ENCODE measurements at regions of chr5 and their contacts with region 1.

Region 1: DNA sequence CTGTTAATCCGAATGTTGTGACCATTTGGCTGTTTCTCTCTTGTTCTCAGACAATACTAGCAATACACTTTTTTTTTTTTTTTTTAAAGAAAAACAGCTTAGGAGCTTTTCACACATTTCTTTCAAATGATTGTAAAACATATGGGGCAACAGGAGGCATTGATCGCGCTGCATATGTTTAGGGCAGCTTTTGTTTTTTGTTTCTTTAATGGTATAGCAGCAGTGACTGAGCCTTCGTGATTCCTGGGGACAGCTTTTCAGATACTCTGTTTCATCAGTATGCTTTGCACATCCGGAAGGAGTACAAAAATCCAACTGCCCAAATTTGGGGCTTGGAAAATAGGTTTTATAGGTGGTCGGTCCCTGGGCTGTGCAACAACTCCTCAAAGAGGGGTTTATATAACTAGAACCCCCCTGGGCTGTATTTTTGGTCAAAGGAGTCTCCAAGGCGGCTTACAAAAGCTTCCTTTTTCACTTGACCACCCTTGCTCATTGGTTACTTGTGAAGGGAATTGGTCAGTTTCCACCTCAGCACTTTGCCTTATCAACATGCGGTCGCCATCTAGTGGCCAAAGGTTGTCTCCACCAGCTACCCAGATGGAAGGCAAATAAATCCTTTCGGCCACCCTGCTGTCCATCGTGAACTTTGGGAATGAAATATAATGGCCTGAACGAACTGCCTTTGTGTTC is 91.8 kb downstream of the PDE6A start:
- DNase-seq: peak; percentile 87
- H3K4me3 ChIP-seq: no peak overlapping the region
- H3K27ac ChIP-seq: peak overlapping the region; percentile 9 to 63 (median 34)
- H3K4me1 ChIP-seq: peaks cover 0 to 19% (median 15%) of the 10 kb centered on the region in 4 donors
- H3K27me3 ChIP-seq: no peaks in the 10 kb centered on the region
- CTCF ChIP-seq: peak; percentile 85 to 92 (median 89)
- EP300 ChIP-seq: no peak
- POLR2A ChIP-seq: no peak

Region 2: DNA sequence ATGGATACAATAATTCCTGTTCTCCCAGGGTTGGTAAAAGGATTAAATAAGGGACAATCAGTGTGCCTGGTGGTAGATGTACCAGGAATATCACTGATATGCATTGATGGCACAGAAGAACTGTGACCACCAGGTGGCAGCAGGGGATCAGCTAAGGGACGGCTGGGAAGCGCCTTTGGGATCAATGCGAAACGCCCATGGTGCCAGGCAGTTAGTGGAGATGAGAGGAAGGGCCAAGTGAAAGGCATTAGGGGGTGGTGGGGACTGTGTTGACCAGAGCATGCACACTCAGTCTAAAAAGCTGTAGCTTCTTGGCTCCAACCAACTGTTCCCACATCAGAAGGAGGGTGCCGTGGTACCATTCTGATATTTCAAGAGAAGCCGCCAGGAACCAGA is 215.9 kb before region 1 on chr5:
- intact Hi-C with region 1: loop called (anchors 2 kb)
- DNase-seq: peak; percentile 50
- H3K4me3 ChIP-seq: no peak overlapping the region
- H3K27ac ChIP-seq: no peak overlapping the region
- H3K4me1 ChIP-seq: peaks cover 0 to 32% (median 26%) of the 10 kb centered on the region in 4 donors
- H3K27me3 ChIP-seq: no peaks in the 10 kb centered on the region
- CTCF ChIP-seq: peak; percentile 59 to 92 (median 82)
- EP300 ChIP-seq: no peak
- POLR2A ChIP-seq: no peak

Region 3: DNA sequence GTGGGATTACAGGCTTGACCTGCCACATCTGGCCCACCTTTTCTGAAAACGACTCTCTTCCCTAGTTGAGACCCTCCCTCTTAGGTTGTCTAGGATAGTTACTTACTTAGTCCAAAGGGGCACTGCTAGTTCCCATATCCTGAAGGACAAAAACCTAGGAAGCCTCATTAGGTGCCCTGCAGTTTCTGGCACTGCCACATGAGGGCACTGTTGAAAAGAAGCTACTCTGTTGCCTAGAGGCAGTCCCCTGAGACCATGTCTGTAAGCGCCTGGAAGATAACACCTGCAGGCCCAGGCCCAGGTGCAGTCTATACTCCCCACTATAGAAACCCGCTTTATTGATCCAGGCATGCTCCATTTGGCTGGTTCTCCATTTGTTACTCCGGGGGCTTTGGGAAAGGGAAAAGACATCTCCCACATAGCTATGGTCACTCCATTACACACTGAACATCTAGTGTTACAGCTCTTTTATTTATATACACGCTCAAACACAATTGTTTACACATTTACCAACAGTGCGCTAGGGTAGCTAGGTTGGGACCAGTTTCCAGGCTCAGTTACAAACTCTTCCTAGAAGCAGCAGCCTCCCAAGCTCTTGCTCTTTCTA is 196.1 kb before region 1 on chr5:
- intact Hi-C with region 1: loop called (anchors 5 kb)
- DNase-seq: no peak
- H3K4me3 ChIP-seq: no peak overlapping the region
- H3K27ac ChIP-seq: no peak overlapping the region
- H3K4me1 ChIP-seq: no peaks in the 10 kb centered on the region
- H3K27me3 ChIP-seq: no peaks in the 10 kb centered on the region
- CTCF ChIP-seq: peak; percentile 20 to 62 (median 47)
- EP300 ChIP-seq: no peak
- POLR2A ChIP-seq: no peak

Region 4: GRCh38 chr5:149960272-149961185 is 107.7 kb after region 1 on chr5 and contains the start of gene SLC26A2:
- intact Hi-C with region 1: loop called (anchors 5 kb)
- DNase-seq: peak; percentile 99
- H3K4me3 ChIP-seq: peak within 1 kb of the TSS; percentile 62 to 98 (median 82)
- H3K27ac ChIP-seq: peak within 1 kb of the TSS; percentile 86 to 93 (median 90)
- H3K4me1 ChIP-seq: peaks cover 0 to 19% (median 9%) of the 10 kb centered on the region in 4 donors
- H3K27me3 ChIP-seq: no peaks in the 10 kb centered on the region
- CTCF ChIP-seq: no peak
- EP300 ChIP-seq: no peak
- POLR2A ChIP-seq: peak; percentile 89 to 92
- total RNA-seq, gene SLC26A2: 6.4 to 12.1 (median 7.0) TPM

Measured in sigmoid colon (tissue), 7 donors.